ENCODE measurements at regions of chr2 and their contacts with region 1.

Region 1: GRCh38 chr2:35410431-35411061 is 945.0 kb upstream of the CRIM1 start:
- DNase-seq: no peak
- H3K4me3 ChIP-seq: no peak overlapping the region
- H3K27me3 ChIP-seq: no peaks in the 10 kb centered on the region
- CTCF ChIP-seq: peak; percentile 83

Region 2: DNA sequence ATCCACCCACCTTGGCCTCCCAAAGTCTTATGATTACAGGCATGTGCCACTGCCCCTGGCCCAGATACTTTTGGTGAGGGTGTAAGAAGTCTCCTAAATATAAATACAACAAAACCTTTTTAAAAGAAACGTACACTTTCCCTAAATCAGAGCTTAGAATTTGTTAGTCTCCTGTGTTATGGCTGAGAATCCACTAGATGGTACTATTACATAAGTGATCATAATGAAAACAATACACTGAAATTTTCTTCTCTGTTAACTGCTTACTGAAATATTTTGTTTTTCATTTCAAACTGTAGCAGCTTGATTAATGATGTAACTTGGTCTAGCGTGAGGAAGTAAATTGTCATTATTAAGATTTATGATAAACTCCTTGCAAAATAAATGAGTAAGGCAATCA is 1736.6 kb before region 1 on chr2:
- CTCF ChIA-PET with region 1: interaction called, 16 read pairs
- POLR2A ChIA-PET with region 1: no interaction called
- DNase-seq: no peak
- H3K4me3 ChIP-seq: no peak overlapping the region
- H3K27me3 ChIP-seq: no peaks in the 10 kb centered on the region
- CTCF ChIP-seq: peak; percentile 46

Region 3: DNA sequence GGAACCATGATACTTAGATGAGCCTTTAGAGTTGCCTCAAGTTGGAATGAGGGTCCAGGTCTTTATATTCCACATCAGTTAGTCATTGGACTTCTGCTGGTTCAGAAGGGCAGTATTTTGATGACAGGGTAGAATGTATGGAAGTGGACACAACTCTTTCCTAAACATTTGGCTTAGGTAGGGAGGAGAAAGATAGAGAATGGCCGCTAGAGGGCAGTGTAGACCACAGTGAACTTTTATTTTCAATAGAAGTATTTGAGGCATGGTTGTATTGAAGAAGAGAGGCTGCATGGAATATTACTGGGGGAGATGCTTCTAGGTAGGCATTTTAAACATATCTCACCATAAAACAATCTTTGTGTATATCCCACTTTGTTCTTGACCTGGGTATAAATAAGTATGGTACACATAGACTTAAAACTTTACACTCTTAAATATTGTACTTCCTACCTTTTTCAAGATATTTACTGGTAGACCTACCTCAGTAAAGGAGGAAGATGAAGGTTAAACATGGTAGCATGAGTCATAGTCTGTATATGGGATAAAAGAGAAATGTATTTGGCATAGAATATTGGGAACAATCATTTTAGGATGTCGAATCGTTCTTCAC is 1313.9 kb before region 1 on chr2:
- CTCF ChIA-PET with region 1: interaction called, 27 read pairs
- POLR2A ChIA-PET with region 1: no interaction called
- DNase-seq: no peak
- H3K4me3 ChIP-seq: no peak overlapping the region
- H3K27me3 ChIP-seq: no peaks in the 10 kb centered on the region
- CTCF ChIP-seq: peak; percentile 67

Region 4: GRCh38 chr2:35454966-35455638 is 44.6 kb after region 1 on chr2:
- CTCF ChIA-PET with region 1: no interaction called
- POLR2A ChIA-PET with region 1: no interaction called
- DNase-seq: no peak
- H3K4me3 ChIP-seq: no peak overlapping the region
- H3K27me3 ChIP-seq: no peaks in the 10 kb centered on the region
- CTCF ChIP-seq: no peak